ENCODE measurements at regions of chr4 and their contacts with region 1.

Region 1: DNA sequence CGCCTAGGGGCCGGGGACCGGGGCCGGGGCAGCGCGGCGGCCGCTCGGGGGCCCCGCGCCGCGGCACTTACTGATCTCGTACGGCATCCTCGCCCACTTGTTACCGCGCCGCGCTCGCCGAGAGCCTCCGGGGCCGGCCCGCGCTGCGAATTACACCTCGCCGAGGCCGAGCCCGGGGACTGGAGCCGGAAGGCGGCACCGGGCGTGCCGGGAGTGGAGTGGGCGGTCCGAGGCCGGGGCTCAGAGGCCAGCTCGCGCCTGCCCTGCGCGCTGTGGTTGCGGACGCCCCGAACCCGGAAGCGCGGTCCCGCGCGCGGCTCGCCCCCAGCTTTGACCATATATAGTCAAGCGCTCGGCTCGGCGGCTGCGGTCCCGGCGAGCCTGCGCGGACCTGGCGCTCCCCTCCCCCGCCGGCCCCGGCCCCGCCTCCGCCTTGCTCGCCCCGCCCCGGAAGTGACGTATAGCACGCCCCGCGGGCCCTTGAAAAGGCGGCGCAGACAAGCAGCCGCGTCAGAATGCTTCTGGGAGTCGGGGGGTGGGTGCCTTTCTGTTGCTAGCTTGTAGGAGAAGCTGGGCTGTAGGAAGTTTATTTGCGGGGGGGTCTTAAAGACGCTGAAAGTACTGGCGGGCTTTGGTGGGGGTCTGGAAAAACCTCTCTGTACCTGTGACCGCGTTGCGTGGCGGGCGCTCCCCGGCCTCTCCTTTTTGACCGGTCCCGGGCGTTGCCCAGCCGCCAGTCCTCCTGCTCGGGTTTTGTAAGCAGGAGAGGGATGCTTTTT is at the start of gene WDR1:
- DNase-seq: peak; percentile 90
- H3K4me3 Mint-ChIP-seq: peak within 1 kb of the TSS; percentile 93
- H3K27ac Mint-ChIP-seq: peak within 1 kb of the TSS; percentile 100
- H3K4me1 Mint-ChIP-seq: peaks cover 80% of the 10 kb centered on the region
- H3K27me3 Mint-ChIP-seq: no peaks in the 10 kb centered on the region
- total RNA-seq, gene WDR1: 271 to 295 TPM

Region 2: DNA sequence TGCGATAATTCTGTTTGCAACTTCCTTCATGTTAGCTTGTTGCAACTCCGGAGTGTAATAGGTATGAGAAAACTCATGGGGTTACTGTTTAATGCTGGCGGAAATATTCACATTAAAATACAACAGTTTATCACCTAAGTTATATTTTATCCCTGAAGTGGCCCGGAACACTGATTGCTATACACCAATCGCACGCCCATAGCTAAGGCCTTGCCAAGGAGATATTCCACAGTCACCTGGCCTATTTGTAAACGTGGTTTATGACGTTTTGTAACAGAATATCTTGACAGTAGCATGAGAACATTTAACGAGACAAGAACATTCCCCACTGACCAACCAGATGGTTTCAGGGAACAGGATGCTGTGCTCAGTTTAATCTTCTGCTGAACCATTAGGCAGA is 969.8 kb before region 1 on chr4:
- CTCF ChIA-PET with region 1: no interaction called
- intact Hi-C with region 1: loop called (anchors 5 kb)
- DNase-seq: no peak
- H3K4me3 Mint-ChIP-seq: no peak overlapping the region
- H3K27ac Mint-ChIP-seq: no peak overlapping the region
- H3K4me1 Mint-ChIP-seq: peaks cover 2% of the 10 kb centered on the region
- H3K27me3 Mint-ChIP-seq: no peaks in the 10 kb centered on the region

Region 3: DNA sequence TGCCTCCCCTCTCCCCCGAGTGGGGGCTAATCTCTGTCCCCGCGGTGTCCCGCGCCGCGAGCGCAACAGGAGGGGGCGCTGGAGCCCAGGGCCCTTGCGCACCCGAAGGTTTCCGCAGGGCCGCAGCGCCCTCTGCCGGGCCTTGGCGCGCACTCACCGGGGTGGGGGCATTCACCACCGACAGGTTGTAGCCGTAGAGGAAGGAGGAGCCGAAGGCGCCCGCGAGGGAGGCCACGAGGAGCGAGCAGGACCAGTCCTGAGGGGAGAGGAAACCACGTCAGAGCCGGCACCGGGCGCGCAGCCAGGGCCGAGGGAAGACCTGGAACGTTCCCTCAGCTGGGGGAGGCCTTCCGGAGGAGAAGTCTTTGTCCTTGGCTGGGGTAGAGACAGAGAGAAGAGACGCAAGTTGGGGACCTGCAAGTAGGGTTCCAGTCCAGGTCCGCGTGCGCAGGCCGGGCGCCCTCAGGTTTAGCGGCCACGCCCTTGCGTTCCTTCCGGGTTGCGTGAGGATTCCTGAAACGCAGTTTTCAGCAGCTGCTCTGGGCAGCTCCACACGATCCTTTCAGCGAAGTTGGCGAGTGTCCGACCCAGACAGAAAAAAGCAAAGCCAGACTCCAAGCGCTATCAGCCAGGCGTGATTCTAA is 97.8 kb before region 1 on chr4:
- CTCF ChIA-PET with region 1: no interaction called
- intact Hi-C with region 1: loop called (anchors 1 kb)
- DNase-seq: peak; percentile 96
- H3K4me3 Mint-ChIP-seq: peak overlapping the region; percentile 85
- H3K27ac Mint-ChIP-seq: peak overlapping the region; percentile 84
- H3K4me1 Mint-ChIP-seq: peaks cover 5% of the 10 kb centered on the region
- H3K27me3 Mint-ChIP-seq: no peaks in the 10 kb centered on the region

Region 4: DNA sequence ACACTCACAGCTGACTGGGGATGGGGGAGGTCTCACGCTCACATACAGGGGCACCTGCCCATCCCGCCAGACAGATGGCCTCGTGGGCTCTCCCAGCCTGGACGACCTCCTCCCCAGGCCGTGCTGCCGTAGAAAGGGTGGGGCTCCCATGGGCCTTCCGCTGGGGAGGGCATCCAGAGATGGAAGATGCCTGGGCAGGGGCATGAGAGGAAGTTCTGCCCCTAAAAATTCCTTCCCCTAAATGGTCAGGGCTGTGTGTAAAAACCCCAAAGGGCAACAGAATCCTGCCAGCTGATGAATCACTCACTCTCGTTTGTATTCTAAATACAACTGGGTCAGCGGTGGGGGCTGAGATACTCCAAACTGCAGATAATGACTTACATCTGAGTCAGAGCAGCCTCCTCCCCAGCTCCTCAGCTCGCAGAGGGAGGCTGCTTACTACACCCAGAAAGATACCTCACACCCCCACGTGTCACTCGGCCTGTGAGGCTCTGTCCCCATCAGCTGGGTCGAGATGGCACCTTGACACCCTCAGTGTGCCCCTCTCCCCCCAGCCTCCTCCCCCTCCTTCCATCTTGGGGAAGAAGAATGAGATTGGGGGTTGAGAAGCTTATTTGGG is 10.2 kb before region 1 on chr4:
- CTCF ChIA-PET with region 1: interaction called, 13 read pairs
- intact Hi-C with region 1: loop called (anchors 1 kb)
- DNase-seq: peak; percentile 92
- H3K4me3 Mint-ChIP-seq: peak overlapping the region; percentile 52
- H3K27ac Mint-ChIP-seq: peak overlapping the region; percentile 90
- H3K4me1 Mint-ChIP-seq: peaks cover 100% of the 10 kb centered on the region
- H3K27me3 Mint-ChIP-seq: no peaks in the 10 kb centered on the region

Region 5: DNA sequence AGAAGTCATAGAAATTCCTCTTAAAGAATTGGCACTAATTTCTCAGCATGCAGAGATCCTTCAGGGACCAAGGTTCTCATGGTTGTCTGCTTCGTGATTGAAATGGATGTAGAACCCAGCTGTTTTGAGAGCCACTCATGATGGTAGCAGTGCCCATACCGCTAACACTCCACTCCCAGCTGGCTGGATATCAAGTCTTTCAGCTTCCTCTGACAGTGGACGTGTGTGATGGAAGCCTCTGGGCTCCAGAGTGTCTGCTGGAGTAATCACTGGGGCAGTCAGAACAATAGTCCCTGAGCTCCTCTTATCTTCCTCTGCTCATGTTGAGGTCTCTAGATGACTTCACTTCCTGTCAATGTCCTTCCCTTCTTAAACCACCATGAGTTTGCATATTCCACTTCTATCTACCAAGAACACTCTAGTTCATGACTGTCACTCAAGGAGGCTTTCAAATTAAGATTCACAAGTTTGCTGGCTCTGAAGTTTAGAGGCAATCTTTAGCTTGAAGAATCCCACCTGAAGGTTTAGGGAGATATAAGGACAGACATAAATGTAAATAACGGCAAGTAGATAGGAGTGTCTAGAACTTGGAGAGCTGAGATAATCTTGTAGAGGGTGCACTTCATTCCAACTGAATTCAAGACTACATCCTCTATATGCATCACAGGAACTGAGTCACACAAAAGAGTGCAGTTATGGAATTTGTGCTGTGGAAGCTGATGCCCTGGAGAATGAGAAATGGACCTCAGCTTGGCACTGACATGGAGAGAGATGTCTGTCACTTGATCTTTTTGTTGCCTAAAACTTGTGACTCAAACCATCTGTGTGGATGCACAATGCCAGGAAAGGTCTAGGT is 64.4 kb after region 1 on chr4:
- CTCF ChIA-PET with region 1: interaction called, 6 read pairs
- intact Hi-C with region 1: loop called (anchors 1 kb)
- DNase-seq: peak; percentile 68
- H3K4me3 Mint-ChIP-seq: no peak overlapping the region
- H3K27ac Mint-ChIP-seq: peak overlapping the region; percentile 85
- H3K4me1 Mint-ChIP-seq: peaks cover 32% of the 10 kb centered on the region
- H3K27me3 Mint-ChIP-seq: no peaks in the 10 kb centered on the region

Region 6: DNA sequence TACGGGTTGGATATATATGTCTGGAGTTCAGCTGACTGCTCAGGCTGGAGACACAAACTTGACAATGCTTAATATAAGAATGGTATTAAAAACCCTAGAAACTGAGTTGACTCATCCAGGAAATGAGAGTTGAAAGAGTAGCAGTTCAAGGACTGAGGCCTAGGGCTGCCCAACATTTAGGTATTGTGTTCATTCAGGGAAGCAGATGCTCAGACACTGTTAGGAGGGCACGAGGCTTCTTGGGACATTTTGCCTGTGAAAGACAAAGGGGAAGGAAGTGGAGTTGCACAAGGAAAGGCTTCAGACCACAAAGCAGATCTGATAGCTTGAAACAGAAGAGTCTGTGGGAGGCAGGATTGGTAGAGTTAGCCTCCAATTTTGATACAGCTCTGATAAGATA is 1363.9 kb after region 1 on chr4:
- CTCF ChIA-PET with region 1: no interaction called
- intact Hi-C with region 1: loop called (anchors 10 kb)
- DNase-seq: peak; percentile 36
- H3K4me3 Mint-ChIP-seq: no peak overlapping the region
- H3K27ac Mint-ChIP-seq: no peak overlapping the region
- H3K4me1 Mint-ChIP-seq: peaks cover 13% of the 10 kb centered on the region
- H3K27me3 Mint-ChIP-seq: no peaks in the 10 kb centered on the region

Measured in activated naive CD4-positive, alpha-beta T cell treated with anti-CD3 and anti-CD28 coated beads for 36 hours (primary cell).